Activated T-helper 1 cell treated with anti-CD3 and anti-CD28 coated beads, Interleukin-12 subunit alpha, Interleukin-12 subunit beta, Interleukin-2, Interleukin-4 antibody, amounts not matched to agents 30 ng/mL and 10 ng/mL and 1 ng/mL, durations not matched to agents 14 hours and 24 hours and 36 hours (primary cell): ENCODE measurements at regions of chr6 and their contacts with region 1.

Region 1: GRCh38 chr6:96837081-96837971 is at the start of gene GPR63:
- DNase-seq: peak; percentile 83
- H3K4me3 Mint-ChIP-seq: peak within 1 kb of the TSS; percentile 93
- H3K27ac Mint-ChIP-seq: peak within 1 kb of the TSS; percentile 73
- H3K4me1 Mint-ChIP-seq: peaks cover 41% of the 10 kb centered on the region
- H3K27me3 Mint-ChIP-seq: peaks cover 43% of the 10 kb centered on the region
- total RNA-seq, gene GPR63: 3.1 and 3.2 TPM in 2 replicates

Region 2: DNA sequence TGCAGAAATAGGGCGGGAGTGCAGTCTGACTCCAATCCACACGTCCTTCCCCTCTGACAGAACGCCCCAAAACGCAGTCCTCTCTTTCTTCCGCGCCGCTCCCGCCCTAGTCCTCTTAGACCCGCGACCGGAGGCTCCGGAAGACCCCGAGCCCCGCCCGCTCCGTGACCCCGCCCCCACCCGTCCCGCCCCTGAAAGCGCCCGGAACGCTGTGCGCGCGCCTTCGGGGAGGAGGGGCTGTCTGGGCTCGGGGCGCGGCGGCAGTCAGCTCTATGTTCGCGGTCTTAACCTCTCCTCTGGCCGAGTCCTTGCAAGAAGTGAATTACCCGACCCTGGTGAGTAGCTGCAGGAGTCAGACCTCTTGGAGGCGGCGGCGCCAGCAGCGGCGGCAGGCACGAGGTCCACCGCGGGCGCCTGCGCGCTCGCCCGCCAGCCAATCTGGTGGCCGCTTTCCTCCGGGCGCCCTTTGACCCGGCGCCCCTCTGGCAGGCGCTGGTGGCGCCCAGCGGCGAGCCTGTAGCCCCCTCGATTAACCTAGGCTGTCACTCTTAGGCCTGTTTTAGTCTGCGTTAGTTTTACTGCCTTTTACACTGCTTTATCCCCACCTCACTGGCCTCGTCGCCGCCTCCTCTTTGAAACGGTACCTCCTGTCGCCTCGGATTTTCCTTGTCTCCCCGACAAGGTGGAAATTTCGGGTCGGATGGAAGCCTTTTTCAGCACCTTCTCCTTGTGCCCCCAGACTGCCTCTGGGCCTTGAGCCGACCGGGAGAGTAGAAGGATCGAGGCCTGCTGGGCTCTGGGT is 1259.8 kb before region 1 on chr6 and contains the start of gene MANEA:
- intact Hi-C with region 1: loop called (anchors 5 kb)
- DNase-seq: peak; percentile 77
- H3K4me3 Mint-ChIP-seq: peak within 1 kb of the TSS; percentile 91
- H3K27ac Mint-ChIP-seq: peak within 1 kb of the TSS; percentile 98
- H3K4me1 Mint-ChIP-seq: peaks cover 46% of the 10 kb centered on the region
- H3K27me3 Mint-ChIP-seq: peaks cover 1% of the 10 kb centered on the region
- total RNA-seq, gene MANEA: 23.1 and 26.8 TPM in 2 replicates

Region 3: GRCh38 chr6:96521644-96522464 is 315.5 kb before region 1 on chr6 and contains the start of gene UFL1:
- intact Hi-C with region 1: loop called (anchors 1 kb)
- DNase-seq: peak; percentile 89
- H3K4me3 Mint-ChIP-seq: peak within 1 kb of the TSS; percentile 100
- H3K27ac Mint-ChIP-seq: peak within 1 kb of the TSS; percentile 100
- H3K4me1 Mint-ChIP-seq: peaks cover 24% of the 10 kb centered on the region
- H3K27me3 Mint-ChIP-seq: no peaks in the 10 kb centered on the region
- total RNA-seq, gene UFL1: 22.0 and 22.7 TPM in 2 replicates

Region 4: GRCh38 chr6:96626759-96627364 is 210.5 kb before region 1 on chr6:
- intact Hi-C with region 1: loop called (anchors 5 kb)
- DNase-seq: no peak
- H3K4me3 Mint-ChIP-seq: no peak overlapping the region
- H3K27ac Mint-ChIP-seq: no peak overlapping the region
- H3K4me1 Mint-ChIP-seq: peaks cover 5% of the 10 kb centered on the region
- H3K27me3 Mint-ChIP-seq: peaks cover 11% of the 10 kb centered on the region

Region 5: DNA sequence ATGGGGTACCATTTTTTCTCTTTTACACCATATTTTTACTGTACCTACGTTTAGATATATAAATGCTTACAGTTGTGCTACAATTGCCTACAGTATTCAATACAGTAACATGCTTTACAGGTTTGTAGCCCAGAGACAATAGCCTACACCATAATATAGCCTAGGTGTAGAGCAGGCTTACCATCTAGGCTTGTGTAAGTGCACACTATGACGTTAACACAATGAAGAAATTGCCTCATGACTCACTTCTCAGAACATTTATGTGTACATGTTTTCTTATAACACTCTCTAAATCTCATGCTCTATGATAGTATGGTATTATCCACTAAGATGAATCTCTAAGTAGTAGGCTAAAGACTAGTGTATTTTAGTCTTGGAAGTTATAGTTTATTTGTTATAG is 13.6 kb before region 1 on chr6:
- intact Hi-C with region 1: no loop called
- DNase-seq: no peak
- H3K4me3 Mint-ChIP-seq: no peak overlapping the region
- H3K27ac Mint-ChIP-seq: no peak overlapping the region
- H3K4me1 Mint-ChIP-seq: no peaks in the 10 kb centered on the region
- H3K27me3 Mint-ChIP-seq: no peaks in the 10 kb centered on the region

Region 6: DNA sequence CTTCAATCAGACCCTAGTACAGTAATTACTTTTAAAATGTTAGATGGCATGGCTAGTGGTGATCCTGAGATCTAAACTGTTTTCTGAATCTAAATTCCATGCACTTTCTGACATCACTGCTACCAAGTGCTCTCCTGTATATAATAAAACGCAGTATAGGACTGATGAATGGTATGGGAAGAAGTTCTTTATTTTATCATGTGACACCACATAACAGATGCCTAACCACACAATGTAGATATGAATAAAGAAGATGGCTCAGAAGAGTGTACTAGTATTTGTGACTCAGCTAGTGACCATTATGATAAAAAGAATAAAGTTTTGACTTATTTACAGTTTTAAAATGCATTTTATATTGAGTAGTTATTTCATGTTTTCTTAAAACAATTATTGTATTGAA is 51.8 kb after region 1 on chr6:
- intact Hi-C with region 1: loop called (anchors 2 kb)
- DNase-seq: no peak
- H3K4me3 Mint-ChIP-seq: no peak overlapping the region
- H3K27ac Mint-ChIP-seq: no peak overlapping the region
- H3K4me1 Mint-ChIP-seq: peaks cover 6% of the 10 kb centered on the region
- H3K27me3 Mint-ChIP-seq: no peaks in the 10 kb centered on the region

Region 7: GRCh38 chr6:96923871-96924493 is 86.7 kb after region 1 on chr6:
- intact Hi-C with region 1: loop called (anchors 1 kb)
- DNase-seq: no peak
- H3K4me3 Mint-ChIP-seq: peak overlapping the region; percentile 87
- H3K27ac Mint-ChIP-seq: peak overlapping the region; percentile 85
- H3K4me1 Mint-ChIP-seq: peaks cover 33% of the 10 kb centered on the region
- H3K27me3 Mint-ChIP-seq: peaks cover 2% of the 10 kb centered on the region

Region 8: GRCh38 chr6:97059473-97059872 is 222.1 kb after region 1 on chr6:
- intact Hi-C with region 1: loop called (anchors 1 kb)
- DNase-seq: no peak
- H3K4me3 Mint-ChIP-seq: no peak overlapping the region
- H3K27ac Mint-ChIP-seq: no peak overlapping the region
- H3K4me1 Mint-ChIP-seq: no peaks in the 10 kb centered on the region
- H3K27me3 Mint-ChIP-seq: peaks cover 3% of the 10 kb centered on the region